ENCODE measurements at regions of chr1 and their contacts with region 1.

Region 1: DNA sequence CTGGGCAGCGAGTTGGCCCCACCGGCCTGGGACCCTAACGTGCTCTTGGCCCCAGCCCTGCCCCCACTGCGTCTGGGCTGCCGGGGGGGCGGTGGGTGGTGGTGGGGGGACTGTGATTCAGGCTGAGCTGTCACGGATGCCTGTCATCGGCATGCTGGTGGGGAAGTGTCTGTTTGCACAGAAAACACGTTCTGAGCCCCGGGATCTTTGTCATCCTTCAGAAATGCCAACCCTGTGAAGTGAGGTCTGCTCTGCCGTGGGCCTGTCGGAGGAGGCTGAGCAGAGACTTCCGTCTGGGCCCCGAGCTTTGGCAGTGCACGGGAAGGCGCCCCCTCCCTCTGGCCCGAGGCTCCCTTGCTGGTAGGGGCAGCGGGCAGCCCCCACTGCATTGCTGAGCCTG is 24.3 kb upstream of the PLCH2 start:
- DNase-seq: no peak
- ATAC-seq: peak; percentile 50
- H3K4me3 ChIP-seq: no peak overlapping the region
- H3K27ac ChIP-seq: no peak overlapping the region
- H3K4me1 ChIP-seq: peaks cover 0 to 17% of the 10 kb centered on the region in 2 experiments; a peak in 2 of 4 replicates
- H3K27me3 ChIP-seq: no peaks in the 10 kb centered on the region
- CTCF ChIP-seq: no peak
- POLR2A ChIP-seq: no peak
- RAD21 ChIP-seq: no peak

Region 2: GRCh38 chr1:2494323-2494693 is 42.6 kb after region 1 on chr1:
- CTCF ChIA-PET with region 1: no interaction called
- POLR2A ChIA-PET with region 1: no interaction called
- RAD21 ChIA-PET with region 1: no interaction called
- intact Hi-C with region 1: loop called (anchors 1 kb)
- DNase-seq: peak; percentile 33
- ATAC-seq: peak; percentile 68
- H3K4me3 ChIP-seq: no peak overlapping the region
- H3K27ac ChIP-seq: no peak overlapping the region
- H3K4me1 ChIP-seq: peaks cover 9 to 11% of the 10 kb centered on the region in 2 experiments; a peak in 3 of 4 replicates
- H3K27me3 ChIP-seq: no peaks in the 10 kb centered on the region
- CTCF ChIP-seq: no peak
- POLR2A ChIP-seq: no peak
- RAD21 ChIP-seq: no peak